SK-N-SH (cell line): ENCODE measurements at regions of chr14 and their contacts with region 1.

Region 1: GRCh38 chr14:64303471-64303917 is 9.3 kb upstream of the ESR2 start:
- DNase-seq: peak; percentile 65
- H3K4me3 ChIP-seq: peak overlapping the region in 1 of 2 experiments; percentile 19; a peak in 1 of 4 replicates
- H3K27ac ChIP-seq: no peak overlapping the region
- H3K4me1 ChIP-seq: no peaks in the 10 kb centered on the region
- H3K27me3 ChIP-seq: no peaks in the 10 kb centered on the region
- CTCF ChIP-seq: peak; percentile 86
- EP300 ChIP-seq: no peak
- RAD21 ChIP-seq: peak; percentile 92

Region 2: GRCh38 chr14:63991833-63992232 is 311.7 kb before region 1 on chr14:
- CTCF ChIA-PET with region 1: interaction called, 10 read pairs
- POLR2A ChIA-PET with region 1: no interaction called
- DNase-seq: no peak
- H3K4me3 ChIP-seq: no peak overlapping the region
- H3K27ac ChIP-seq: no peak overlapping the region
- H3K4me1 ChIP-seq: no peaks in the 10 kb centered on the region
- H3K27me3 ChIP-seq: no peaks in the 10 kb centered on the region
- CTCF ChIP-seq: no peak
- EP300 ChIP-seq: no peak
- RAD21 ChIP-seq: no peak

Region 3: DNA sequence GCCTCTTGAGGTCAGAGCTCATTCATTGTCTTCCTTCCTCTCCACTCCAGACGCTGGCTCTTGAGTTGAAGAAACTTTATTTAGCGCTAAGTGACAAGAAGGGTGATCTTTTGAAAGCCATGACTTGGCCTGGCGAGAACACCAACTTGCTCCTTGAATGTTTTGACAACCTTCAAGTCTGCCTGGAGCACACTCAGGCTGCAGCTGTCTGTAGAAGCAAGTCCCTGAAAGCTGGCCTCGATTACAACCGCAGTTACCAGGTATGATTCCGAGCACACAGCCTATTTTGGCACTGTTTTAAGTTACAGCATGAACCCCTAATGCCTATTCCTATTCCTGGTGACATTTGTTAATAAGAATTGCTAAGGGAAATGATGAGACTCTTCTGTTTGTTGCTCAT is 176.9 kb before region 1 on chr14:
- CTCF ChIA-PET with region 1: interaction called, 12 read pairs
- POLR2A ChIA-PET with region 1: no interaction called
- DNase-seq: no peak
- H3K4me3 ChIP-seq: no peak overlapping the region
- H3K27ac ChIP-seq: no peak overlapping the region
- H3K4me1 ChIP-seq: no peaks in the 10 kb centered on the region
- H3K27me3 ChIP-seq: no peaks in the 10 kb centered on the region
- CTCF ChIP-seq: no peak
- EP300 ChIP-seq: no peak
- RAD21 ChIP-seq: no peak

Region 4: GRCh38 chr14:64324895-64325294 is 21.4 kb after region 1 on chr14:
- CTCF ChIA-PET with region 1: interaction called, 11 read pairs
- POLR2A ChIA-PET with region 1: no interaction called
- DNase-seq: no peak
- H3K4me3 ChIP-seq: no peak overlapping the region
- H3K27ac ChIP-seq: no peak overlapping the region
- H3K4me1 ChIP-seq: no peaks in the 10 kb centered on the region
- H3K27me3 ChIP-seq: no peaks in the 10 kb centered on the region
- CTCF ChIP-seq: no peak
- EP300 ChIP-seq: no peak
- RAD21 ChIP-seq: no peak